AG04449 (cell line): ENCODE measurements at regions of chr17 and their contacts with region 1.

Region 1: DNA sequence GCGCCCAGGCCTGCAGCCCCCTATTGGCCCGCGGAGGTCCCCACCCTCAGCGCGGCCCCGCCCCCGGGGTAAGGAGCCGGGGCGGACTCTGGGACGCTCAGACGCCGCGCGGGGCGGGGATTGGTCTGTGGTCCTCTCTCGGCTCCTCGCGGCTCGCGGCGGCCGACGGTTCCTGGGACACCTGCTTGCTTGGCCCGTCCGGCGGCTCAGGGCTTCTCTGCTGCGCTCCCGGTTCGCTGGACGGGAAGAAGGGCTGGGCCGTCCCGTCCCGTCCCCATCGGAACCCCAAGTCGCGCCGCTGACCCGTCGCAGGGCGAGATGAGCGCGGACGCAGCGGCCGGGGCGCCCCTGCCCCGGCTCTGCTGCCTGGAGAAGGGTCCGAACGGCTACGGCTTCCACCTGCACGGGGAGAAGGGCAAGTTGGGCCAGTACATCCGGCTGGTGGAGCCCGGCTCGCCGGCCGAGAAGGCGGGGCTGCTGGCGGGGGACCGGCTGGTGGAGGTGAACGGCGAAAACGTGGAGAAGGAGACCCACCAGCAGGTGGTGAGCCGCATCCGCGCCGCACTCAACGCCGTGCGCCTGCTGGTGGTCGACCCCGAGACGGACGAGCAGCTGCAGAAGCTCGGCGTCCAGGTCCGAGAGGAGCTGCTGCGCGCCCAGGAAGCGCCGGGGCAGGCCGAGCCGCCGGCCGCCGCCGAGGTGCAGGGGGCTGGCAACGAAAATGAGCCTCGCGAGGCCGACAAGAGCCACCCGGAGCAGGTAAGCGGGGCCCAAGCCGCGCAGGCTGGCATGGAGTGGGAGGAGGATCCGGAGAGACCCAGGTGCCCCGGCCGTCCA is at the start of gene NHERF1:
- DNase-seq: peak; percentile 38
- H3K4me3 ChIP-seq: peak within 1 kb of the TSS; percentile 76
- CTCF ChIP-seq: peak; percentile 18

Region 2: DNA sequence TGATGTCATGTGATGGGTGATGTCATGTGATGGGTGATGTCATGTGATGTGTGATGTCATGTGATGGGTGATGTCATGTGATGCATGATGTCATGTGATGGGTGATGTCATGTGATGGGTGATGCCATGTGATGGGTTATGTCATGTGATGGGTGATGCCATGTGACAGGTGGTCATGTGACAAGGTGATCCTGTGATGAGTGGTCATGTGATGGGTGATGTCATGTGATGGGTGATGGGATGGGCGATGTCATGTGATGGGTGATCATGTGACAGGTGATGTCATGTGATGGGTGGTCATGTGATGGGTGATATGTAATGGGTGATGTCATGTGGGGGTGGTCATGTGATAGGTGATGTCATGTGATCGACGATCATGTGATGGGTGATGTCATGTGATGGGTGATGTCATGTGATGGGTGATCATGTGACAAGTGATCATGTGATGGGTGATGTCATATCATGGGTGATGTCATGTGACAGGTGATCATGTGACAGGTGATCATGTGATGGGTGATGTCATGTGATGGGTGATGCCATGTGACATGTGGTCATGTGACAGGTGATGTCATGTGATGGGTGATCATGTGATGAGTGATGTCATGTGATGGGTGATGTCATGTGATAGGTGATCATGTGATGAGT is 234.6 kb before region 1 on chr17:
- CTCF ChIA-PET with region 1: no interaction called
- POLR2A ChIA-PET with region 1: no interaction called
- DNase-seq: no peak
- H3K4me3 ChIP-seq: no peak overlapping the region
- CTCF ChIP-seq: no peak

Region 3: GRCh38 chr17:74671031-74671771 is 77.5 kb before region 1 on chr17:
- CTCF ChIA-PET with region 1: no interaction called
- POLR2A ChIA-PET with region 1: no interaction called
- DNase-seq: no peak
- H3K4me3 ChIP-seq: no peak overlapping the region
- CTCF ChIP-seq: no peak

Region 4: DNA sequence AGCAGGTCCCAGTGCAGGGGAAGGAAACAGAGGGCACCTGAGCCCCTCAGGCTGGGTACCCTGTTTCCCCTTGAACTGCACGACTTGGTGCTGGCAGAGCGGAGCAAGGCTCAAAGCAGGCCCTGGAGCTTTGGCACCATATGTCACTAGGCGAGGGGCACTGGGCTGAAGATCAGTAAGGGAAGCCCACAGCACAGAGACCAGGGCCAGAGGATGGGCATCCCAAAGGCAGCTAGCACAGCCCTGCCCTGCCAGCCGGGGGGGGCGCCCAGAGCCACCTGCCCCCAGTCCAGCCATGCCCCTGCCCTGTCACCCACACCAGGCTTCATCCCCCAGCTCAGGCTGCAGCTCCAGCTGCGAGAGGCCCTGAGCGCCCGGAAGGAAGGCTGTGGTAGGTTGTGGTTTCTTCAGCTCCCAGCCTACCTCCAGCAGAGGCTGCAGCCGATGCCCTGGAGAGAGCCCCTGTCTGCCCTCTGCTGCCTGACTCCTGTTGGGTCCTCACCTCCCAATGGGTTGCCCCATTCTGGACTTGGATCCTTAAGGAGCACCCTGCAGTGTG is 10.6 kb after region 1 on chr17:
- CTCF ChIA-PET with region 1: interaction called, 71 read pairs
- POLR2A ChIA-PET with region 1: interaction called, 10 read pairs
- DNase-seq: no peak
- H3K4me3 ChIP-seq: no peak overlapping the region
- CTCF ChIP-seq: no peak

Region 5: DNA sequence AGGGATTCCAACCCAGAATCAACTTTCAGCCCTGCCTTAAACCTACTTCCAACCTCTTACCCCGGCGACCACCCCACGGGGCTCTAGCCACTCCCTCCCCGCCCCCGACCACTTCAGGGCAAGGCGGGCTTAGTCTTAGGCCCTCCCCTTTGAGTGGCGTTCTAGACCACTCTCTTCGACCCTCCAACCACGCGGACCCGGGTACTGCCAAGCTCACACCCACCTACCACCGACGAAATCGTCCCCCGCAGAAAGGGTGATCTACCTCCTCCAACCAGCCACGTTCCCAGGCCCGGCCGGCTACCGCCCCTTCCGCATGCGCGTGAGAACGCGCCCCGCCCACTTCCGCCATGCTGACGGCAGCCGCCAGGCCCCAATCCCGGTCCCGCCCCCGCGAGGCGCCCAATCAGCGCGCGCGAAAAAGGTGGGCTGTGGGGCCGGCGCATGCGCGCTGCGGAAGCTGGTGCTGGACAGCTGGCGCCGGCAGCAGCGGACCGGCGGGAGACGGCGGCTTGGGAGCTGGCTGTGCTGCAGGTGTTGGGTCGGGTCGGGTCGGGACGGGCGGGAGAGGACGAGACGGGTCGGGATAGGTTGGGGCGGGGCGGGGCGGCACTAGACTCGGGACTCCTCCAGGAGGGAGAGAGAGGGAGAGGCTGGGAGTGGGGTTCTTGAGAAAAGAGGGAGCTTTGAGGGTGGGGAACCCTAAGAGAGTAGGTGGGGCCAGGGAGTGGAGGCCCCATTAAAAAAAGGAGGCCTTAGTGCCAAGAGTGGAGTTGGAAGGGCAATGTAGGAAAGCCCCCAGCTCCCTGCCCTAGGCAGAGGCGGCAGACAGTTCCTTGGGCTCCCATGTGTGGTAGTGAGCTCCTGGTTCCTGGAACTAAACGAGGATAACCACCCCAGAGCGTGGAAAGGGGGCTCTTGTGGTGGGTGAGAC is 27.6 kb after region 1 on chr17 and contains the start of gene NAT9:
- CTCF ChIA-PET with region 1: interaction called, 150 read pairs
- POLR2A ChIA-PET with region 1: interaction called, 6 read pairs
- DNase-seq: peak; percentile 34
- H3K4me3 ChIP-seq: peak within 1 kb of the TSS; percentile 98
- CTCF ChIP-seq: no peak

Region 6: GRCh38 chr17:74790161-74791054 is 41.7 kb after region 1 on chr17:
- CTCF ChIA-PET with region 1: interaction called, 32 read pairs
- POLR2A ChIA-PET with region 1: no interaction called
- DNase-seq: no peak
- H3K4me3 ChIP-seq: no peak overlapping the region
- CTCF ChIP-seq: no peak

Region 7: GRCh38 chr17:74873038-74873873 is 124.5 kb after region 1 on chr17:
- CTCF ChIA-PET with region 1: interaction called, 185 read pairs
- POLR2A ChIA-PET with region 1: interaction called, 3 read pairs
- DNase-seq: peak; percentile 99
- H3K4me3 ChIP-seq: peak overlapping the region; percentile 86
- CTCF ChIP-seq: no peak